Activated CD4-positive, alpha-beta T cell treated with anti-CD3 and anti-CD28 coated beads for 36 hours (primary cell): ENCODE measurements at regions of chr1 and their contacts with region 1.

Region 1: GRCh38 chr1:217660353-217661062 is 29.4 kb downstream of the SPATA17 start:
- DNase-seq: peak; percentile 9
- ATAC-seq: no peak
- H3K4me3 Mint-ChIP-seq: no peak overlapping the region
- H3K27ac Mint-ChIP-seq: no peak overlapping the region
- H3K4me1 Mint-ChIP-seq: no peaks in the 10 kb centered on the region
- H3K27me3 Mint-ChIP-seq: peaks cover 2% of the 10 kb centered on the region

Region 2: GRCh38 chr1:217431393-217431792 is 229.1 kb before region 1 on chr1:
- CTCF ChIA-PET with region 1: no interaction called
- POLR2A ChIA-PET with region 1: no interaction called
- intact Hi-C with region 1: loop called in 1 of 2 experiments (anchors 5 kb)
- DNase-seq: no peak
- ATAC-seq: no peak
- H3K4me3 Mint-ChIP-seq: no peak overlapping the region
- H3K27ac Mint-ChIP-seq: no peak overlapping the region
- H3K4me1 Mint-ChIP-seq: no peaks in the 10 kb centered on the region
- H3K27me3 Mint-ChIP-seq: no peaks in the 10 kb centered on the region